ENCODE measurements at regions of chr16 and their contacts with region 1.

Region 1: GRCh38 chr16:86343027-86343787 is 167.1 kb upstream of the FOXF1 start:
- DNase-seq: no peak
- H3K4me3 ChIP-seq: no peak overlapping the region
- H3K27me3 ChIP-seq: no peaks in the 10 kb centered on the region
- CTCF ChIP-seq: no peak

Region 2: GRCh38 chr16:86319585-86320270 is 23.5 kb before region 1 on chr16:
- CTCF ChIA-PET with region 1: interaction called, 12 read pairs
- POLR2A ChIA-PET with region 1: no interaction called
- DNase-seq: no peak
- H3K4me3 ChIP-seq: no peak overlapping the region
- H3K27me3 ChIP-seq: peaks cover 5% of the 10 kb centered on the region; the same call in 1 of the 2 replicates
- CTCF ChIP-seq: no peak

Measured in BJ (cell line).